Motor neuron (in vitro differentiated cells): ENCODE measurements at regions of chr18 and their contacts with region 1.

Region 1: DNA sequence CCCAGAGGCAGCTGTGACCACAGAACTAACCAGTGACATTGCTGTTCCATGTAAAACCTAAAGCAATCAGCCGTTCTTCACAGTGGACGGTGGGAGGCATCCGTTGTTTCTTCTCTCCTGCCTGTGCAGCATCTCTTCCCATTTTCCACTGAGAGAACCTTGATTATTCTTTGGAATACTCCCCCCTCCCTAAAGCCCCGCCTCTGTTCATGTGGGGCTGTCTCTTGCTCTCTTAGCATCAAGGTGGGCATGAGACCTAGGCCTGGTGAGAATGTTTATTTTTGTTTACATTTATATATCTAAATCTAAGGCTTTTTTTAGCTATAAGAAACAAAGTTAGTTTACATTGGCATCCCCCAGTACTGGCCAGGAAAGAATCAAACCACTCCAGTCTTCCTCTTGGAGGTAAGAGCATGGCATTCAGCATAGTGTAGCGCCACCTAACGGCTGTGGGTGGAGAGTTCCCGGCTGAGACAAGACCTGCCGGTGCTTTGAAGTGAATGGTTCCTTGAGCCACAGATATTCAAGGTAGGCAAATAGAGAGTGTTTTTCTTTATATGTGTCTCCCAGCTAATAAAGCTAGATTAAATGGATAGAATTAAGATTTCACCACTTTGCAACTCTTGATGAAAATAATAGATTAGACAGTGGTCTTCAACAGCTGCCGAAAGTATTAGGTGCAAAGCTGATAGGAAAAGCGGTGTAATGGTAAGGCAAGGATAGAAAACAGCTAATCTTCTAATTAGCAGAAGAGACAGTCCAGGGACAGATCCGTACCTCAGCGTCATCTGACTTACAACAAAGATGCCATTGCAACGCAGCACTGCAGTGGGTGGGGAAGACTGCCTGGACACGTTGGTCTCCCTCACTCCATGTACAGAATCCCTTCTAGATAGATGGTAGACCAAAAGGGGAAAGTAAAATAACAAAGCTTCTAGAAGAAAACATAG is 219.6 kb upstream of the RAB12 start:
- ATAC-seq: peak; percentile 83 to 98 (median 92)
- H3K4me3 ChIP-seq: no peak overlapping the region
- H3K27ac ChIP-seq: no peak overlapping the region
- H3K4me1 ChIP-seq: peaks cover 6 to 11% of the 10 kb centered on the region in 2 donors

Region 2: GRCh38 chr18:7789856-7790552 is 599.7 kb before region 1 on chr18:
- in situ Hi-C with region 1: loop called in 2 of 9 experiments (anchors 25 kb)
- ATAC-seq: peak; percentile 60 to 94 (median 74)
- H3K4me3 ChIP-seq: no peak overlapping the region
- H3K27ac ChIP-seq: no peak overlapping the region
- H3K4me1 ChIP-seq: peaks cover 0 to 37% of the 10 kb centered on the region in 2 donors

Region 3: DNA sequence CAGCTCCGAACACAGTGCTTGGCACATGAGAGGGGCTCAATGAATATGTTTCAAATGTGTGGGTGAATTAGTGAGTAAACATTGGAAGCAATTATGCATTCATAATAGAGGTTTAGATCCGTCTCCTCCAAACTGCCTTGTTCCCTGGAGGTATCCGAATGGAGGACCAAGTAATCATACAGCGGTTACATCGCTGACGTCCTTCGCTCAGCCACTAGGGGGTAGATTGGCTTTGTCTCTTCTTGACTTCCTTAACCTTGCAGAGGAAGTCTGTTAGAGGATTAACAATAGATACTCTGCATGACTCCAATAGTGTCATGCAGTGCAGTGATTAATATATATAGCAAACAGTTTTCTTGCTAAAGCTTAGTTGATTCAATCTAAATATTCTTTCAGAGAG is 305.5 kb before region 1 on chr18:
- in situ Hi-C with region 1: loop called in 2 of 9 experiments (anchors 25 kb)
- ATAC-seq: peak; percentile 63 to 97 (median 76)
- H3K4me3 ChIP-seq: no peak overlapping the region
- H3K27ac ChIP-seq: no peak overlapping the region
- H3K4me1 ChIP-seq: no peaks in the 10 kb centered on the region

Region 4: DNA sequence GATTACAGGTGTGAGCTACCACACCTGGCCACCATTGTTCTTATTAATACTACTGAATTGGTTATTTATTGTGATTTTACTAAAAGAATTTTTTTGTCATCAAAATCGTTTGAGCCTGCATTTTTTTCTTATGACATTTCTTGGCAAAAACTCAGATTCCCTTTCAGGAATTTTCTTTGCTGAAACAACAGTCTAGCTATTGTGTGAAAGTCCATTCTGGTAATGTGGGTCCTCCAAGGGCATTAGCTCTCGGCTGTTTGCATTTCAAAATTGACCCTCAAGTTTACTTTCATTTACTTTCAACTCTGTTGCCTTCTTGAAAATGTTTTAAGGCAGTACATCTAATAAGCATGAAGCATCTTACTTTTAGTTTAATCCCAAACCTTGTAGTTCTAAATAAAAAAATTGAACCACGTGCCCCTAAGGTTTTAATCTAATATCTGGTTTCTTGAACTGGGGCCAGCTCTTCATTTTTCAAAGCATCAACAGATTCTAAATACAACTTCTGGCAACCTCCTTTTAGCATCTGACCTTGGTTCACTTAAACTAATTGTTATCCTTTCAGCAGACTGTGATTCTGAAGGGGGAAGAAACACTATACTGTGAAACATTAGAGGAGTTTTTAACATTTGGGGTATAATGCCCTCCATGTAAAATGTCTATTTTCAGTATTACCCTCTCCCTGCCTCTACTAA is 105.6 kb before region 1 on chr18:
- in situ Hi-C with region 1: no loop called
- ATAC-seq: no peak
- H3K4me3 ChIP-seq: no peak overlapping the region
- H3K27ac ChIP-seq: no peak overlapping the region
- H3K4me1 ChIP-seq: peaks cover 16 to 19% of the 10 kb centered on the region in 2 donors

Region 5: GRCh38 chr18:8615397-8616027 is 225.8 kb after region 1 on chr18:
- in situ Hi-C with region 1: no loop called
- ATAC-seq: peak; percentile 91 to 99 (median 94)
- H3K4me3 ChIP-seq: peak overlapping the region in 1 of 5 donors; percentile 17
- H3K27ac ChIP-seq: peak overlapping the region; percentile 54 to 63
- H3K4me1 ChIP-seq: peaks cover 23 to 25% of the 10 kb centered on the region in 2 donors